ENCODE measurements at regions of chrX and their contacts with region 1.

Region 1: GRCh38 chrX:17632942-17633341 is 104.4 kb upstream of the SCML1 start:
- DNase-seq: peak in 1 of 5 donors; percentile 14
- H3K4me3 ChIP-seq: peak overlapping the region in 1 of 2 donors; percentile 9
- H3K4me3 Mint-ChIP-seq: peak overlapping the region; percentile 1 to 75 (median 48)
- H3K27ac ChIP-seq: no peak overlapping the region
- H3K27ac Mint-ChIP-seq: peak overlapping the region; percentile 14 to 91 (median 71)
- H3K4me1 ChIP-seq: peaks cover 13% of the 10 kb centered on the region
- H3K4me1 Mint-ChIP-seq: peaks cover 6 to 13% (median 8%) of the 10 kb centered on the region in 4 donors
- H3K27me3 ChIP-seq: no peaks in the 10 kb centered on the region
- H3K27me3 Mint-ChIP-seq: no peaks in the 10 kb centered on the region

Region 2: GRCh38 chrX:17580539-17581152 is 52.3 kb before region 1 on chrX:
- CTCF ChIA-PET with region 1: no interaction called
- POLR2A ChIA-PET with region 1: no interaction called
- intact Hi-C with region 1: no loop called
- DNase-seq: no peak
- H3K4me3 ChIP-seq: no peak overlapping the region
- H3K4me3 Mint-ChIP-seq: no peak overlapping the region
- H3K27ac ChIP-seq: no peak overlapping the region
- H3K27ac Mint-ChIP-seq: no peak overlapping the region
- H3K4me1 ChIP-seq: no peaks in the 10 kb centered on the region
- H3K4me1 Mint-ChIP-seq: no peaks in the 10 kb centered on the region
- H3K27me3 ChIP-seq: no peaks in the 10 kb centered on the region
- H3K27me3 Mint-ChIP-seq: peaks cover 0 to 1% of the 10 kb centered on the region in 2 donors

Region 3: GRCh38 chrX:17655211-17656034 is 22.5 kb after region 1 on chrX:
- CTCF ChIA-PET with region 1: no interaction called
- POLR2A ChIA-PET with region 1: no interaction called
- intact Hi-C with region 1: loop called (anchors 2 kb)
- DNase-seq: peak in 1 of 5 donors; percentile 4
- H3K4me3 ChIP-seq: peak overlapping the region; percentile 17 to 47
- H3K4me3 Mint-ChIP-seq: peak overlapping the region; percentile 80 to 93 (median 87)
- H3K27ac ChIP-seq: no peak overlapping the region
- H3K27ac Mint-ChIP-seq: peak overlapping the region in 5 of 7 donors; percentile 29 to 75 (median 50)
- H3K4me1 ChIP-seq: peaks cover 23% of the 10 kb centered on the region
- H3K4me1 Mint-ChIP-seq: peaks cover 9 to 36% (median 24%) of the 10 kb centered on the region in 4 donors
- H3K27me3 ChIP-seq: no peaks in the 10 kb centered on the region
- H3K27me3 Mint-ChIP-seq: no peaks in the 10 kb centered on the region